ENCODE measurements at regions of chr10 and their contacts with region 1.

Region 1: GRCh38 chr10:61937631-61938351 is 36.3 kb downstream of the ARID5B start:
- DNase-seq: no peak
- ATAC-seq: peak; percentile 21; the same call in 2 of the 3 replicates
- H3K4me3 ChIP-seq: no peak overlapping the region
- H3K27ac ChIP-seq: peak overlapping the region; percentile 71; the same call in 1 of the 2 replicates
- H3K4me1 ChIP-seq: peaks cover 44% of the 10 kb centered on the region
- H3K27me3 ChIP-seq: no peaks in the 10 kb centered on the region
- CTCF ChIP-seq: no peak
- EP300 ChIP-seq: no peak
- POLR2A ChIP-seq: no peak
- RAD21 ChIP-seq: no peak

Region 2: GRCh38 chr10:60798031-60798430 is 1139.8 kb before region 1 on chr10:
- CTCF ChIA-PET with region 1: no interaction called
- POLR2A ChIA-PET with region 1: no interaction called
- RAD21 ChIA-PET with region 1: no interaction called
- SMC1A ChIA-PET with region 1: no interaction called
- in situ Hi-C with region 1: no loop called
- intact Hi-C with region 1: no loop called
- DNase-seq: no peak
- ATAC-seq: no peak
- H3K4me3 ChIP-seq: no peak overlapping the region
- H3K27ac ChIP-seq: no peak overlapping the region
- H3K4me1 ChIP-seq: no peaks in the 10 kb centered on the region
- H3K27me3 ChIP-seq: no peaks in the 10 kb centered on the region
- CTCF ChIP-seq: no peak
- EP300 ChIP-seq: no peak
- POLR2A ChIP-seq: no peak
- RAD21 ChIP-seq: no peak

Region 3: GRCh38 chr10:61949687-61950086 is 11.9 kb after region 1 on chr10:
- CTCF ChIA-PET with region 1: no interaction called
- POLR2A ChIA-PET with region 1: interaction called, 16 read pairs
- RAD21 ChIA-PET with region 1: no interaction called
- SMC1A ChIA-PET with region 1: interaction called, 9 read pairs
- in situ Hi-C with region 1: no loop called
- intact Hi-C with region 1: no loop called
- DNase-seq: no peak
- ATAC-seq: no peak
- H3K4me3 ChIP-seq: no peak overlapping the region
- H3K27ac ChIP-seq: no peak overlapping the region
- H3K4me1 ChIP-seq: peaks cover 5% of the 10 kb centered on the region; the same call in 1 of the 2 replicates
- H3K27me3 ChIP-seq: no peaks in the 10 kb centered on the region
- CTCF ChIP-seq: no peak
- EP300 ChIP-seq: no peak
- POLR2A ChIP-seq: no peak
- RAD21 ChIP-seq: no peak